Dorsolateral prefrontal cortex (tissue), 120 donors: ENCODE measurements at regions of chr20 and their contacts with region 1.

Region 1: DNA sequence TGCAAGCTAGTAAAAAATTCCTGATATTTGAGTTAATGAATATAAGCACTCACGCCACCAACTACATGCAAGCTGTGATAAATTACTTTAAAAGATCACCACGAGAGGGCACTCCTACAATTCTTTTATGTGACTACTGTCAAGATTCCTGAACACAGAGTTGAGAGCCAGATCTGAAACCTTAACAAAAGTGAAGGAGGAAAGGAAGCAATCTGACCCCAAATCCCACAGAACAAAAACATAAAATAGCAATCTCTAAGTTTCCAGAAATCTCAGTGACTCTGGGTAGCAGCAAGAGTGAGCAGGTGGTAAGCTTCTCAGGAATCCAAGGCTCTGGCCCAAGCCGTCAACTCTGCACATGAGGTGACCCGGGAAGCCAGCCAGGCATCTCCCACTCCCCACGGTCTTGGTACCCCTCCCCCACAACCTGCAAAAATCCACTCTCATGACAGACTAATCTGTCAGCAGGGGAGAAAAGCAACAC is 55.1 kb downstream of the STAU1 start:
- DNase-seq: peak in 1 of 10 donors; percentile 13
- H3K4me3 ChIP-seq: no peak overlapping the region
- H3K27ac ChIP-seq: peak overlapping the region in 20 of 59 donors; percentile 1 to 61 (median 28)
- H3K27me3 ChIP-seq: no peaks in the 10 kb centered on the region
- CTCF ChIP-seq: peak; percentile 51 to 86 (median 73)

Region 2: GRCh38 chr20:48986899-48987298 is 146.1 kb before region 1 on chr20:
- intact Hi-C with region 1: loop called in 1 of 2 experiments (anchors 5 kb)
- DNase-seq: peak in 1 of 10 donors; percentile 50
- H3K4me3 ChIP-seq: no peak overlapping the region
- H3K27ac ChIP-seq: peak overlapping the region in 19 of 59 donors; percentile 1 to 66 (median 22)
- H3K27me3 ChIP-seq: no peaks in the 10 kb centered on the region
- CTCF ChIP-seq: peak in 54 of 56 donors; percentile 25 to 73 (median 47)

Region 3: GRCh38 chr20:49186535-49187329 is 53.7 kb after region 1 on chr20:
- intact Hi-C with region 1: loop called in 1 of 2 experiments (anchors 5 kb)
- DNase-seq: peak in 2 of 10 donors; percentile 33 to 36
- H3K4me3 ChIP-seq: peak overlapping the region; percentile 52 to 95 (median 80)
- H3K27ac ChIP-seq: peak overlapping the region in 50 of 59 donors; percentile 29 to 93 (median 84)
- H3K27me3 ChIP-seq: no peaks in the 10 kb centered on the region
- CTCF ChIP-seq: no peak

Region 4: DNA sequence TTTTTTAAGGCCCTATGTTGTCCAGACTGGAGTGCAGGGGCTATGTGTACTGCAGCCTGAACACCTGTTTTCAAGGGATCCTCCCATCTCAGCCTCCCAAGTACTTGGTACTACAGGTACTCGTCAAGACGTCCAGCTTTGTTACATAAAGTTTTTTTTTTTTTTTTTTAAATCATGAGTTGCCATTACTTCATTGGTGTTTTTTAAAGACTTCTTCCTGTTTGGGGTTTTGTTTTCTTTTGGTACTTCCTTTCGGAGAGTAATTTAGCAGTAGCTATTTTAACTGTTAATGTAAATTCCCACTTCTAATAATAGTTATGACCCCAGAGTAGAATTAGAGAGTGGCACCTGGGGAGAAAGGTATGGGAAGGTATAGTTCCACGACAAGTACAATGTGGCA is 134.3 kb after region 1 on chr20:
- intact Hi-C with region 1: no loop called
- DNase-seq: no peak
- H3K4me3 ChIP-seq: peak overlapping the region in 15 of 59 donors; percentile 2 to 37 (median 10)
- H3K27ac ChIP-seq: peak overlapping the region in 9 of 59 donors; percentile 2 to 38 (median 23)
- H3K27me3 ChIP-seq: no peaks in the 10 kb centered on the region
- CTCF ChIP-seq: no peak

Region 5: GRCh38 chr20:49278036-49278817 is 145.2 kb after region 1 on chr20 and contains the start of gene ZNFX1:
- intact Hi-C with region 1: loop called in 1 of 2 experiments (anchors 5 kb)
- DNase-seq: peak; percentile 97 to 99 (median 98)
- H3K4me3 ChIP-seq: peak within 1 kb of the TSS; percentile 56 to 100 (median 90)
- H3K27ac ChIP-seq: peak within 1 kb of the TSS; percentile 71 to 100 (median 98)
- H3K27me3 ChIP-seq: no peaks in the 10 kb centered on the region
- CTCF ChIP-seq: peak in 45 of 56 donors; percentile 1 to 57 (median 30)
- total RNA-seq, gene ZNFX1: 21.0 to 37.9 (median 26.1) TPM

Region 6: DNA sequence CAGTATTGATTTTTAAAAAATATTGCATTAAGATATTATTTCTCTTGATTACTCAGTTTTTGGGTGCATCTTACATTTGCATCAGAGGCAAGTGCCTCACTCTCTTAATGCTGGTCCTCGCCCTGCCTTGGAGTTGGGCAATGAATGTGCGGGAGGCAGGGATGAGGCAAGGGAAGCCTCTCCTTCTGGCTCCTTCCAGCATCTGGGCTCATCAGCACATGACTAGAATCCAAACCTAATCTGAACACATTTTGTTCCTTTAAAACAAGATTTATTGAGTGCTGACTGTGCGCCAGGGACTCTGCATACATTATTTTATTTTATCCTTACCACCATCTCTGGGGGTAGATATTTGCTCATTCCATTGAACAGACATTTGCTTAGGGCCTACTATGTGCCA is 216.7 kb after region 1 on chr20:
- intact Hi-C with region 1: no loop called
- DNase-seq: peak in 2 of 10 donors; percentile 17 to 51
- H3K4me3 ChIP-seq: no peak overlapping the region
- H3K27ac ChIP-seq: peak overlapping the region in 45 of 59 donors; percentile 1 to 83 (median 56)
- H3K27me3 ChIP-seq: no peaks in the 10 kb centered on the region
- CTCF ChIP-seq: no peak

Region 7: DNA sequence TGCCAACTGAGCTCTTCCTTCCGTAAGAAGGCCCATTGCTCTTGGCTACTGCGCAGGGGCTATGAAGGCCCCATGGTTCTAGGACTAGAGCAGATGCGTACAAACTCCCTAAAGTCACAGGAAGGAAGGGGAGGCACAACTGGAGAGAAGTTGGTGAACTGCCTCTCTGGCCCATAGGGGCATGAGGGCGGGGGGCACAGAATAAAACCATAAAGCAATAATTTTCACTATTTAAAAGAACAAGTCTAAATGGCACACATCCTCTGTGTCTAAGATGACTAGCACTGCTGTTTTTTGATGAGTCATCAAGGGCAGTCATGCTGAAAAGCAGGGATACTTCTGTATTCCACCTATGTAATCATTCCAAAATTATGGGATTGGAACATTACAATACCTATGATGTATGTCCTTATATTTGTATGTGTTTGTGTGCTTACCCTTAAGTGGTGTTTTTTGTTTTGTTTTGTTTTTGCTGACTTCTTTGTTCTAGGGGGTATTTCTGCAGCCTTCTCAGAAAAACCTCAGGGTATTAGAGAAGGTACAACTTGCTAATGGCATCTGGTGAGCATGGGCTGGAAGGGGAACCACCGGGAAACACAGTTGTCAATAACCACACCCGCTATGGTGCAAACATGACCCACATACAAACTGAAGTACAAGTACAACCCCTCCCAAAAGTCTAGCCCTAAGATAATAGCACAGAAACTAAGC is 543.7 kb after region 1 on chr20:
- intact Hi-C with region 1: no loop called
- DNase-seq: no peak
- H3K4me3 ChIP-seq: peak overlapping the region in 1 of 59 donors; percentile 19
- H3K27ac ChIP-seq: peak overlapping the region in 13 of 59 donors; percentile 3 to 56 (median 21)
- H3K27me3 ChIP-seq: no peaks in the 10 kb centered on the region
- CTCF ChIP-seq: no peak